ENCODE measurements at regions of chr1 and their contacts with region 1.

Region 1: GRCh38 chr1:154324669-154325582 is at the start of gene ATP8B2:
- DNase-seq: peak; percentile 83 to 96
- ATAC-seq: peak; percentile 68 to 84
- H3K4me3 ChIP-seq: peak within 1 kb of the TSS; percentile 94
- H3K27ac ChIP-seq: peak within 1 kb of the TSS; percentile 91 to 95
- H3K4me1 ChIP-seq: peaks cover 12% of the 10 kb centered on the region
- CTCF ChIP-seq: peak; percentile 91
- EP300 ChIP-seq: no peak
- POLR2A ChIP-seq: peak; percentile 26
- RAD21 ChIP-seq: peak; percentile 44 to 55
- polyA plus RNA-seq, gene ATP8B2: 12.7 and 17.2 TPM in 2 replicates

Region 2: DNA sequence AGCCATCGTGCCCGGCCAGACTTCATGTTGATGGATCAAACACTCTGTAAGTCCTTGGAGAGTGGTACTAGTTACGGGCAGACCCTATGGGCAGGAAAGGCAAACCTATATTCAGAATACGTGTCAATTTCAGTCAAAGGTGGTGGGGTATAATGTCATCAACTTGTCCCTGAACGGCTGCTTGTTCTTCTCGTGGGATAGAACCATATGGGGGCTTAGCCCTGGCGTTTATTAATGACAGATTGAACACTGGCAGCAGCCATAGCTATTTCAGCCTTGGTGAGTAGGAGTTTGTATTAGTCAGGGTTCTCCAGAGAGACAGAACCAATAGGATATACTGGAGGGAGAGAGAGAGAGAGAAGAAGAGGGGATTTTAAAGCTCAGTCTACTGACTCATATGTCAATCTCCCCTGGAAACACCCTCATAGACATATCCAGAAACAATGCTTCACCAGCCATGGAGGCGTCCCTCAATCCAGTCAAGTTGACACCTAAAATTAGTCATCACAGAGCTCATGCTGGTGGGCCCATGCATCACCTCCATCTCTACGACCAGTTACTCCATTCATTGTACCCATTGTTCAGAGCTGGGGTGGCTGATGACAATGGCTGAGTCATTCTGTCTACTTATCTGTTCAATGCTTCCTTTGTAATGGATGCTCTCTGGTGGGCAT is 20.1 kb before region 1 on chr1:
- CTCF ChIA-PET with region 1: interaction called, 12 read pairs
- POLR2A ChIA-PET with region 1: no interaction called
- DNase-seq: no peak
- ATAC-seq: peak in 1 of 2 experiments; percentile 49; a peak in 3 of 6 replicates
- H3K4me3 ChIP-seq: no peak overlapping the region
- H3K27ac ChIP-seq: no peak overlapping the region
- H3K4me1 ChIP-seq: no peaks in the 10 kb centered on the region
- CTCF ChIP-seq: no peak
- EP300 ChIP-seq: no peak
- POLR2A ChIP-seq: no peak
- RAD21 ChIP-seq: no peak

Region 3: DNA sequence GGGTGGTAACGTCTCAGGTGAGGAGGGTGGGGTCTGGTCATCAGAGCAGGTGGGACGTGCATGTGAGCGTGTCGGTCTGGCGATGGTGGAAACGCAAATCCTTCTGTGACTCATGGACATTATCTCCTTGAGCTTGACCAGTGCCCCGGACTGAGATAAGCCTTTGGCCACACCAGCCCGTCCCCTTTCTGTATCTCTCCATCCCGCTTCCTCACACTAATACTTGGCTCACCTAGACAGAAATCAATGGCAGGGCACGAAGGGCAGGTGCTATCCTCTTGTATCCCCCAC is 11.9 kb before region 1 on chr1:
- CTCF ChIA-PET with region 1: interaction called, 19 read pairs
- POLR2A ChIA-PET with region 1: no interaction called
- DNase-seq: no peak
- ATAC-seq: no peak
- H3K4me3 ChIP-seq: no peak overlapping the region
- H3K27ac ChIP-seq: no peak overlapping the region
- H3K4me1 ChIP-seq: no peaks in the 10 kb centered on the region
- CTCF ChIP-seq: no peak
- EP300 ChIP-seq: no peak
- POLR2A ChIP-seq: no peak
- RAD21 ChIP-seq: no peak

Region 4: GRCh38 chr1:154546264-154547063 is 221.5 kb after region 1 on chr1:
- CTCF ChIA-PET with region 1: interaction called, 17 read pairs
- POLR2A ChIA-PET with region 1: no interaction called
- DNase-seq: peak; percentile 81 to 90
- ATAC-seq: peak; percentile 91 to 95
- H3K4me3 ChIP-seq: no peak overlapping the region
- H3K27ac ChIP-seq: no peak overlapping the region
- H3K4me1 ChIP-seq: peaks cover 21% of the 10 kb centered on the region
- CTCF ChIP-seq: peak; percentile 79
- EP300 ChIP-seq: no peak
- POLR2A ChIP-seq: no peak
- RAD21 ChIP-seq: peak; percentile 85 to 88